ENCODE measurements at regions of chr20 and their contacts with region 1.

Region 1: DNA sequence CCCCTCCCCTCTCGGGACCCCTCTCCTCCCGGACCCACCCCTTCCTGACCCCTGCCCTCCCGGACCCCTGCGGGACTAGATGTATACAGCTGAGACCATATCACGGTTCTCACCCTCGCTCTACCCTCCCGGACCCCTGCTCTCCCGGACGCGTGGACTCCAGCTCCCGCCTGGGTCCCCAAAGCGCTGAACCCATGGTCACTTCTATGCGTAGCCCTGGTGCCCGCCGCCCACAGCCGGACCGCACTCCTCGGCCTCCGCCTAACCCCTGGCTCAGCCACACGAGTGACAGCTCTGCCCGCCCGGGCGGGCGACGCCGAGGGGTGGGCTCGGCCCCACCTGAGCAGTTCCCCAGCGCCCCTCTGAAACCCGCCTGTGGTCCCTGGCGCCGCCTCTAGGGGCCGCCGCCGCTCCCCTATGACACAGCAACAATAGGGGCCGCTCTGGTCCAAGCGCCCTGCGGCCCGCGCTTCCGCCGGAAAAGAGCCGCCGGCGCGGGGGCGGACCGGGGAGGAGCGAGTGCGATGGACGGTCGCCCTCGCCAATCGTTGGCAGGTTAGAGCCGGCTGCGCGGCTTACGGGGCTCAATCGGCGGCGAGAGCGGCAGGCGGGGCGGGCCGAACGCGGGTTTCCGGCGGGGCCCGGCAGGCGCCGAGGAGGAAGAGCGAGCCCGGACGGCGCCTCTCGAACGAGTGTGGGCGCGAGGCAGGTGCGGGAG is at the start of gene ADRM1:
- DNase-seq: peak; percentile 98
- H3K4me3 ChIP-seq: peak within 1 kb of the TSS; percentile 100
- H3K27ac ChIP-seq: peak within 1 kb of the TSS; percentile 85
- H3K4me1 ChIP-seq: peaks cover 27% of the 10 kb centered on the region
- CTCF ChIP-seq: peak; percentile 84
- total RNA-seq, gene ADRM1: 123 and 128 TPM in 2 replicates

Region 2: DNA sequence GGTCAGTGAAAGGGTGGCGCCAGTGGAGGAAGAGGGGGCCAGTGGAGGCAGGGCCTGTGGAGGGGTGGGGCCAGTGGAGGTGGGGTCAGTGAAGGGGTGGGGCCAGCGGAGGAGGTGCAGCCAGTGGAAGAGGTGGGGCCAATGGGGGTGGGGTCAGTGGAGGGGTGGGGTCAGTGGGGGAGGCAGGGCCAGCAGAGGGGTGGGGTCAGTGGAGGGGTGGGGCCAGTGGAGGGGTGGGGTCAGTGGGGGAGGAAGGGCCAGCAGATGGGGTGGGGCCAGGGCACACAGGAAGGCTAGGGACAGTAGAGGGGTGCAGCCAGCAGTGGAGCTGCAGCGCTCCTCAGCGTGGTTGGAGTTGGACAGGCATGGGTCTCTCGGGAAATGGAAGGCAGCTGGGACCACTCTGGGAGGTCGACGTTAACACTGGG is 19.0 kb after region 1 on chr20:
- CTCF ChIA-PET with region 1: no interaction called
- POLR2A ChIA-PET with region 1: no interaction called
- intact Hi-C with region 1: loop called (anchors 1 kb)
- DNase-seq: peak; percentile 80
- H3K4me3 ChIP-seq: no peak overlapping the region
- H3K27ac ChIP-seq: no peak overlapping the region
- H3K4me1 ChIP-seq: peaks cover 11% of the 10 kb centered on the region
- CTCF ChIP-seq: no peak

Region 3: DNA sequence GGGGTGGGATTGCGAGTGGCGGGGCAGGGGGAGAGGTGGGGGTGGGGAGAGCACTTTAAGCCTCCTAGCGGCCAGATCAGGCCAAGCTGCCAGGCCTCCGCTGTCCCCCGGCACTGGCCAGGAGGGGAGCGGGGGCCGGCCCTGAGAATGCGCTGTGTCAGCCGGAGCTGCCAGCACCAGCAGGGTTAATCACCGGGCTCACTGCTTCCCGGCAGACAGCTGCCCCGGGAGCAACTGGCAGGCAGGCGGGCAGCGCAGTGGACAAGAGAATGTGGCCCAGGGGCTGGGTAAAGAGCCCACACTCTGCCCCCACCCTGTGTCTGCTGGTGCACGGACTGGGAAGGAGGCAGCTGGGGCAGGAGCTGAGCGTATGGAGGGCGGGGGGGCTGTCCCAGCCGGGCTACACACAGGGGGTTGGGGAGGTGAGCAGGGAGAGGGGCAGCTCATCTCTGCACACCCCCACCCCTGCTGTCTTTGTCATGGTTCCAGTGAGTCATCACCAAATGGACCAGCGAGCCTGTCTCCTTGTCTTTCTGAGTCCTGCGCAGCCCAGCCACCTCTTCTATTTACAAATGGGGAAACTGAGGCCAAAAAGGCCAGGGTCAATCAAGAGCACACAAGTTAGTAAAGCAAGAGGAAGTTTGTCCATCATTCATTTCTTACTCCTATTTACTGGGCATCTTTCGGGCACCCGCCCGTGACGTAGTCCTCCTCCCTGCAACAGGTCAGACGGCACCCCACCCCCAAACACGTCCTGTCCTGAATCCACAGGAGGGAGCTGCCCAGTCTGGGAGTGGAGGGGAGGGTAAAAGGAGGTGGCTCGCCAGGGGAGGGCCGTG is 66.7 kb after region 1 on chr20:
- CTCF ChIA-PET with region 1: interaction called, 4 read pairs
- POLR2A ChIA-PET with region 1: interaction called, 4 read pairs
- intact Hi-C with region 1: loop called (anchors 1 kb)
- DNase-seq: no peak
- H3K4me3 ChIP-seq: no peak overlapping the region
- H3K27ac ChIP-seq: no peak overlapping the region
- H3K4me1 ChIP-seq: peaks cover 39% of the 10 kb centered on the region
- CTCF ChIP-seq: peak; percentile 42

Region 4: GRCh38 chr20:62407221-62407992 is 104.9 kb after region 1 on chr20 and contains the start of gene CABLES2:
- CTCF ChIA-PET with region 1: no interaction called
- POLR2A ChIA-PET with region 1: no interaction called
- intact Hi-C with region 1: loop called (anchors 2 kb)
- DNase-seq: peak; percentile 96
- H3K4me3 ChIP-seq: peak within 1 kb of the TSS; percentile 86
- H3K27ac ChIP-seq: peak within 1 kb of the TSS; percentile 69
- H3K4me1 ChIP-seq: peaks cover 42% of the 10 kb centered on the region
- CTCF ChIP-seq: peak; percentile 28; the same call in 1 of the 2 replicates
- total RNA-seq, gene CABLES2: 11.1 and 14.8 TPM in 2 replicates

Measured in OCI-LY7 (cell line).